Left ventricle myocardium inferior (tissue), 1 donor: ENCODE measurements at regions of chr9 and their contacts with region 1.

Region 1: DNA sequence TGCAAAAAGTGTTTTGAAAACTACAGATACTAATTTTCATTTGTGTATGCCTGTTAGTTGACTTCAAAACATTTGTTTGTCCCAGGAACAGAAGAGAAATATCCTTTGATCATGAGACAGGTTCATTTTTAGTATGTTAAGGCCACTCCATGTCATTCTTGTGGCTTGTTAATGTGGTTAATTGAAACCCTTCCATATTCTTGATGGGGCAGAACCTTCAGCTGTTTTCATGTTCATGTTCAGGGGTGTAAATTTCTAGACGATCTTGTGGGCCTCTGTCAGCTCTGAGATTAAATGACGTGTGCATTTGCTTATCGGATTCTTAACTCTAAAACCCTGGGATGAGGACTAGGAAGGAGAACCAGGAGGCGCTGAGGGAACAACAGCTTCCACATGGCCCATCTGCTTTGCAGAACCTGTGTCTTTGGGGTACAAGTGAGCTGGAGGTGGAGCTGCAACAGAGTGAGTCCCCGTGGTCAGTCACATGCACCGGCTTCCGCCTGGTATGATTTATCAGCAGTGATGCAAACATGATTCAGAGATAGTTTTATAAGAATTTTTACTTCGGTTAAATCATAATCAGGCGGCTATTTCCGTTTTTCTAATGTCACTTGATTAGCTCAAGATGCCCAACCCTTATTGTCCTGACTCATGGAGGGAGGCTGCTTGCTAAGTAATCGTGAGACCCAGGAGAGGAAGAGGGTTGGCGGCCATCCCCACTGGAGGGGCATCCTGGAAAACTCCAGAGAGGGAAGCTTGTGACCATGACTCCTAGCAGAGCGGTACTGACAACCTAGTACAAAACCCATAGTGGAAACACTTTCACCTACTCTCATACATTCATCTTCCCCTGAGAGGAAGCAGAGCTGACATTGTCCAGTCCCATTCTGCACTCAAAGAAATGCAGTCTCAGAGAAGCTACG is 138.4 kb downstream of the C9orf152 start:
- DNase-seq: no peak
- H3K4me3 ChIP-seq: no peak overlapping the region
- H3K27ac ChIP-seq: peak overlapping the region; percentile 74
- H3K4me1 ChIP-seq: peaks cover 100% of the 10 kb centered on the region
- H3K27me3 ChIP-seq: no peaks in the 10 kb centered on the region
- CTCF ChIP-seq: no peak

Region 2: GRCh38 chr9:110152704-110153374 is 83.3 kb after region 1 on chr9:
- intact Hi-C with region 1: loop called (anchors 10 kb)
- DNase-seq: no peak
- H3K4me3 ChIP-seq: no peak overlapping the region
- H3K27ac ChIP-seq: peak overlapping the region; percentile 71
- H3K4me1 ChIP-seq: peaks cover 100% of the 10 kb centered on the region
- H3K27me3 ChIP-seq: no peaks in the 10 kb centered on the region
- CTCF ChIP-seq: peak; percentile 78

Region 3: DNA sequence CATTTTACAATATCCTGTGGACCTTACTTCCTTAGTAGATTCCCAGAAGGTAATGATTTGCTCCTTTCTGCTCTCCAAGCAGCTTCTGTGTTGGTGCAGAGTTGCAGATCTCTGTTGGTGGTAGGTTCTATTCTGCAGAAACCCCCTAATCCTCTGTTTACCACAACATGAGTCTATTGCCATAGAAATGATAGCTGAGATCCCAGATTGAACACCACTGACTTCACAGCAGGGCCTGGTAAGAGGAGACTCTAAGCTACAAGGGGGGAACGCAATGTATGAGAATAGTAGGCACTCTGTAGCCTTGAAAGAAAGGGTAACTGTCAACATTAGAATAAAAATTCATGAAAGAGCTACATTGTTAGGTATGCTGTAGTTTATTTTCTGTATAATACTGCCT is 658.5 kb after region 1 on chr9:
- intact Hi-C with region 1: no loop called
- DNase-seq: no peak
- H3K4me3 ChIP-seq: no peak overlapping the region
- H3K27ac ChIP-seq: no peak overlapping the region
- H3K4me1 ChIP-seq: peaks cover 5% of the 10 kb centered on the region
- H3K27me3 ChIP-seq: no peaks in the 10 kb centered on the region
- CTCF ChIP-seq: no peak